Activated CD8-positive, alpha-beta T cell treated with anti-CD3 and anti-CD28 coated beads, Interleukin-2, amount 10 ng/mL, durations not matched to agents 7 days and 5 days (primary cell): ENCODE measurements at regions of chr18 and their contacts with region 1.

Region 1: DNA sequence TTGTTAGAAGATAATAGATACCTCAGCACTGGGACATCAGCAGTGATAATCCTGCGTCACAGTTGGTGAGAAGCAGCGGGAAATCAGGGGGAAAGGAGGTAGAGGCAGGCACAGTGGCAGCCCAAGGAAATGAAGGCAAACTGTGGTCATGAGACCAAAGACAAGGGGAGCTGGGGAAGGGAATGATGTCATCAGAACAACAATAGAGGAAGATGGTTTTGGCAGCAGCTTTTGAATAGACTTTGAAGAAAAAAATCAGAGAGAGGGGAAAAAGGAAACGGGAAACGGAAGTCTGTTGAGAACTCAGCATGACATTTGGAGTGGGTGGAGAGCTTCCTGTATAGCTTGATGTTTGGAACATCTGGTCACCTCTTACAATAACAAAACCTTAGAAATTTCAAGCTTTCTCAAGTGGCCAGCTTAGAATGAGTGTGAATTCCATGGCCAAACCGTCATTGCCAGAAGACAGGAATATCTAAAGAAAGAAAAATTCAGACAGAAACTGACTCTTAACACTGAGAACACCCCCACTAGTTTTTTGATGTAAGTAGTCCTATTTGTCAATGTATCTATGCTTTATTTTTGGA is 18.4 kb upstream of the YES1 start:
- DNase-seq: peak; percentile 52
- ATAC-seq: peak; percentile 80
- H3K4me3 Mint-ChIP-seq: peak overlapping the region; percentile 45
- H3K27ac Mint-ChIP-seq: peak overlapping the region; percentile 74
- H3K4me1 Mint-ChIP-seq: peaks cover 23% of the 10 kb centered on the region
- H3K27me3 Mint-ChIP-seq: peaks cover 7% of the 10 kb centered on the region

Region 2: DNA sequence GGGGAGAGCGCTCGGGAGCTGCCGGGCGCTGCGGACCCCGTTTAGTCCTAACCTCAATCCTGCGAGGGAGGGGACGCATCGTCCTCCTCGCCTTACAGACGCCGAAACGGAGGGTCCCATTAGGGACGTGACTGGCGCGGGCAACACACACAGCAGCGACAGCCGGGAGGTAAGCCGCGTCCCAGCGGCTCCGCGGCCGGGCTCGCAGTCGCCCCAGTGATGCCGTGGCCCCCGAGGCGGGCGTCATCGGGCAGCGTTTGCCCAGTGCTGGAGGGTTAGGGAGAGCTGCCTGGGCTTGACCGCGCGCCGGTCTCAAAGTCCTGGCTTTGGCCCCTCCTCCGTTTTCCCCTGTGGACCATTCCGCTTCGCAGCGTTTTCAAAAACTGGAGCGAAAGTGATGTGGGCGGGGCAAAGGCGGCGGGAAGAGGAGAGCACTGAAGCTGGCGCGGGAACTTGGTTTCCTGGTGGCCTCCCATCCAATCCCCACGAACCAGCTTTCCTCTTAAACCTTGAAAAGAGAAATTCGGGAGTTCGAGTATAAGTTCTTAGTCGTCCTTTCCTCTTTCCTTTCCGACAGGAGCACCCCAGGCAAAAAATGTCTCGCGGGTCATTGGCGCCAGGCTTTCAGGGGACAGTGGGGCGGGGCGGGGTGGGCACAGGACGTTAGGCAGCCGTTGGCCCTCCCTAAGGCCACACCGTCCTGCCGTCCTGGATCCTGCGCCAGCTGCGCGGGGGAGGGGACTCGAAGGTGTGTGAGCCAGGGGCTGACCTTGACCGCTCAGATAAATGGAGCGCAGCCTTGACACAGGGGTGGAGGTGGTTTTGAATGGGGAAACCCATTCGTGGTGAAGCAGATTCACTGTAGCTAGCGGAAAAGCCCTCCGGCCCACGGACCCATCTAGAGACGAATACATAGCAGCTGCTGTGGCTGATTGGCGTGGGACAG is 172.1 kb before region 1 on chr18:
- CTCF ChIA-PET with region 1: interaction called, 15 read pairs
- POLR2A ChIA-PET with region 1: interaction called, 5 read pairs
- DNase-seq: peak; percentile 88
- ATAC-seq: peak; percentile 73
- H3K4me3 Mint-ChIP-seq: peak overlapping the region; percentile 99
- H3K27ac Mint-ChIP-seq: peak overlapping the region; percentile 94
- H3K4me1 Mint-ChIP-seq: peaks cover 52% of the 10 kb centered on the region
- H3K27me3 Mint-ChIP-seq: no peaks in the 10 kb centered on the region

Region 3: GRCh38 chr18:712401-713134 is 117.8 kb before region 1 on chr18 and contains the start of gene ENOSF1:
- CTCF ChIA-PET with region 1: interaction called, 40 read pairs
- POLR2A ChIA-PET with region 1: interaction called, 6 read pairs
- DNase-seq: peak; percentile 88
- ATAC-seq: peak; percentile 89
- H3K4me3 Mint-ChIP-seq: peak within 1 kb of the TSS; percentile 88
- H3K27ac Mint-ChIP-seq: peak within 1 kb of the TSS; percentile 93
- H3K4me1 Mint-ChIP-seq: peaks cover 51% of the 10 kb centered on the region
- H3K27me3 Mint-ChIP-seq: no peaks in the 10 kb centered on the region
- total RNA-seq, gene ENOSF1: 66.0 to 74.1 TPM

Region 4: DNA sequence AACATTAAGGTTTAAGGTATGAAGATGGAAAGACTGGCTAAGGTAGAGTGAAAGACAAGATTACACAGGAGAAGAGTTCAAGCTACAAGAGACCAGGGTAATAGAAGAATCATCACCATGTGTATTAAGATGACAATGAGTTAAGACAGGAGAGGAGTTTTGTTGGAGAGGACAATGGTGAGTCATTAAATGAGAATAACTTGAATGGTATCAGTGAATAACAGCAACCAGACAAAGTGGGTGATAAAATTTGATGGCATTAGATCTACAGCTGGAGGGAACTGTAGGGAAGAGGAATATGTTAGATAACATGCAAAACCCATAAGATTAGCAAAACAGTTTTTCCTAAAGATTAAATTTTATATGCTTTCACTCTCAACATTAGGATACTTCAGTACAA is 99.2 kb before region 1 on chr18:
- CTCF ChIA-PET with region 1: interaction called, 29 read pairs
- POLR2A ChIA-PET with region 1: no interaction called
- DNase-seq: no peak
- ATAC-seq: no peak
- H3K4me3 Mint-ChIP-seq: no peak overlapping the region
- H3K27ac Mint-ChIP-seq: peak overlapping the region; percentile 56
- H3K4me1 Mint-ChIP-seq: peaks cover 11% of the 10 kb centered on the region
- H3K27me3 Mint-ChIP-seq: no peaks in the 10 kb centered on the region

Region 5: GRCh38 chr18:750456-750855 is 80.0 kb before region 1 on chr18:
- CTCF ChIA-PET with region 1: interaction called, 219 read pairs
- POLR2A ChIA-PET with region 1: no interaction called
- DNase-seq: no peak
- ATAC-seq: no peak
- H3K4me3 Mint-ChIP-seq: no peak overlapping the region
- H3K27ac Mint-ChIP-seq: peak overlapping the region; percentile 4
- H3K4me1 Mint-ChIP-seq: peaks cover 2% of the 10 kb centered on the region
- H3K27me3 Mint-ChIP-seq: no peaks in the 10 kb centered on the region

Region 6: DNA sequence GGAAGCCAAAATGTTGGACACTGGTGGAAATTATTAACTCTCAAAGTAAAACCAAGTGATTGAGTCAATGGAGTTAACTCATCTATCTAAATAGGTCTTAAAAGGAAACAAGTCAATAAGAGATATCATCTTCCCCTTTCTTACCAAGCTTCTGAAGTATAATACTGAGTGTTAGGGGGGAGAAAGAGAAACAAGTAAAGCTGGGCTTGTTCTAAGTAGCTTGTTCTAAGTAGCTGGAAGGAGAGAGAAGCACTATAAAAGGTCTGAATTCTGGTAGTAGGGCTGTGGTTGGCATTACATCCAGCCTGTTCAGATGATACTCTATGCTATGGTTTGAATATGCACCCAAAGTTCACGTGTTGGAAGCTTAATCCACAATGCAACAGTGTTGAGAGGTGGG is 45.2 kb before region 1 on chr18:
- CTCF ChIA-PET with region 1: interaction called, 25 read pairs
- POLR2A ChIA-PET with region 1: no interaction called
- DNase-seq: no peak
- ATAC-seq: peak; percentile 39
- H3K4me3 Mint-ChIP-seq: no peak overlapping the region
- H3K27ac Mint-ChIP-seq: no peak overlapping the region
- H3K4me1 Mint-ChIP-seq: peaks cover 30% of the 10 kb centered on the region
- H3K27me3 Mint-ChIP-seq: no peaks in the 10 kb centered on the region

Region 7: GRCh38 chr18:812376-813171 is 17.8 kb before region 1 on chr18:
- CTCF ChIA-PET with region 1: interaction called, 170 read pairs
- POLR2A ChIA-PET with region 1: interaction called, 81 read pairs
- DNase-seq: peak; percentile 84
- ATAC-seq: peak; percentile 66
- H3K4me3 Mint-ChIP-seq: peak overlapping the region; percentile 79
- H3K27ac Mint-ChIP-seq: peak overlapping the region; percentile 98
- H3K4me1 Mint-ChIP-seq: peaks cover 68% of the 10 kb centered on the region
- H3K27me3 Mint-ChIP-seq: no peaks in the 10 kb centered on the region

Region 8: GRCh38 chr18:966759-967576 is 136.6 kb after region 1 on chr18:
- CTCF ChIA-PET with region 1: no interaction called
- POLR2A ChIA-PET with region 1: no interaction called
- DNase-seq: no peak
- ATAC-seq: no peak
- H3K4me3 Mint-ChIP-seq: no peak overlapping the region
- H3K27ac Mint-ChIP-seq: no peak overlapping the region
- H3K4me1 Mint-ChIP-seq: no peaks in the 10 kb centered on the region
- H3K27me3 Mint-ChIP-seq: peaks cover 6% of the 10 kb centered on the region